AG04450 (cell line): ENCODE measurements at regions of chr1 and their contacts with region 1.

Region 1: DNA sequence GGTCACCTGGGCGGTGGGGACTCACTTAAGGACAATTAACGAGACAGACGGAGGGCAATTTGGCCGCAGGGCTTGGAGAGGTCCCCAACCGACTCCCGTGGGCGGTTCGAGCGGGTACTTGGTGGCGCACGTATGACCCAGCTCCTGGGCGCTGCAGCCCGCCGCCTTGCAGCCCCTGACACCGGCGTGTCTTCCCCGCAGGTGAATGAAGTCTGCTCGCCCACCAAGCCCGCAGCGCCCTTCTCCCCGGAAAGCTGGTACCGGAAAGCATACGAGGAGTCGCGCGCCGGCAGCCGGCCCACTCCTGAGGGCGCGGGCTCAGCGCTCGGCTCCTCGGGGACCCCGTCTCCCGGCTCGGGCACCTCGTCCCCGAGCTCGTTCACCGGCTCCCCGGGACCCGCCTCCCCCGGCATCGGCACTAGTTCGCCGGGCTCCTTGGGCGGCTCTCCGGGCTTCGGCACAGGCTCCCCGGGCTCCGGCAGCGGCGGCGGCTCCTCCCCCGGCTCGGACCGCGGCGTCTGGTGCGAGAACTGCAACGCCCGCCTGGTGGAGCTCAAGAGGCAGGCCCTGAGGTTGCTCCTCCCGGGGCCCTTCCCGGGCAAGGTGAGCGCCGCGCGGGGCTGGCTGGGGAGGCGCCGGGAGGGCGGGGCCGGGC is 1.4 kb downstream of the KIF26B start:
- DNase-seq: no peak
- H3K4me3 ChIP-seq: peak overlapping the region; percentile 80
- H3K27ac ChIP-seq: no peak overlapping the region
- H3K27me3 ChIP-seq: peaks cover 3% of the 10 kb centered on the region
- CTCF ChIP-seq: peak; percentile 68

Region 2: GRCh38 chr1:245142171-245142798 is 13.9 kb before region 1 on chr1:
- CTCF ChIA-PET with region 1: interaction called, 14 read pairs
- POLR2A ChIA-PET with region 1: no interaction called
- DNase-seq: no peak
- H3K4me3 ChIP-seq: no peak overlapping the region
- H3K27ac ChIP-seq: no peak overlapping the region
- H3K27me3 ChIP-seq: peaks cover 10% of the 10 kb centered on the region
- CTCF ChIP-seq: no peak

Region 3: DNA sequence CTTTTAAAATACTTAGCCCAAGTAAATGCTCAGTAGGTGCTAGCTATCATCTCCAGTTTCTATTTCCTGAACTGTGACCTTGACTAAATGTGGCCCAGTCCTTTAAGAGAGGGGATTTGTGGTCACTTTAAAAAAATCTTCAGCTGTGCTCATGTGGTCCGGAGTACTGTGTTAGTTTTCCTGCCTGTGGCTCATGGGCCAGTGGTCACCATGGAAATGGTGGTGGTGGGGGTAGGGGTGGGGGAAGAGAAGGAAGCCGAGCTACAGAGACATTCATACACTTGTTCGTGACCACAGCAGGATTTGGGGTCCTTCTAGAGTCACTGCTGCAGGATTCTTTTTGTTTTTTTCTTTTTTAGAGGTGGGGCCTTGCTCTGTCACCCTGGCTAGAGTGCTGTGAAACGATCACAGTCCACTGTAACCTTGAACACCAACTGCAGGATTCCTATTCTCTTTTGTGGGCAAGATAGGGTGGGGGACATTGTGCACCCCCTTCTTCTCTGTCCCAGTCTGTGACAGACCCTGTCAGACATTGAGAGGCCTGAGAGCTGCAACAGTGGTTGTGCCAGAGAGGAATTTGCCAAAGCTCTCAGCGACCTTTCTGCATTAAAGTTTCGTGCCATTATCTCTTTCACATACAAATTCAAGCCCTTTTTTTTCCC is 24.4 kb after region 1 on chr1:
- CTCF ChIA-PET with region 1: no interaction called
- POLR2A ChIA-PET with region 1: no interaction called
- DNase-seq: no peak
- H3K4me3 ChIP-seq: no peak overlapping the region
- H3K27ac ChIP-seq: no peak overlapping the region
- H3K27me3 ChIP-seq: no peaks in the 10 kb centered on the region
- CTCF ChIP-seq: no peak

Region 4: GRCh38 chr1:245380790-245381535 is 224.8 kb after region 1 on chr1:
- CTCF ChIA-PET with region 1: interaction called, 14 read pairs
- POLR2A ChIA-PET with region 1: no interaction called
- DNase-seq: no peak
- H3K4me3 ChIP-seq: no peak overlapping the region
- H3K27ac ChIP-seq: no peak overlapping the region
- H3K27me3 ChIP-seq: no peaks in the 10 kb centered on the region
- CTCF ChIP-seq: peak; percentile 51

Region 5: GRCh38 chr1:245500546-245500945 is 344.3 kb after region 1 on chr1:
- CTCF ChIA-PET with region 1: interaction called, 16 read pairs
- POLR2A ChIA-PET with region 1: no interaction called
- DNase-seq: peak; percentile 42
- H3K4me3 ChIP-seq: no peak overlapping the region
- H3K27ac ChIP-seq: no peak overlapping the region
- H3K27me3 ChIP-seq: no peaks in the 10 kb centered on the region
- CTCF ChIP-seq: peak; percentile 9; the same call in 1 of the 2 replicates

Region 6: DNA sequence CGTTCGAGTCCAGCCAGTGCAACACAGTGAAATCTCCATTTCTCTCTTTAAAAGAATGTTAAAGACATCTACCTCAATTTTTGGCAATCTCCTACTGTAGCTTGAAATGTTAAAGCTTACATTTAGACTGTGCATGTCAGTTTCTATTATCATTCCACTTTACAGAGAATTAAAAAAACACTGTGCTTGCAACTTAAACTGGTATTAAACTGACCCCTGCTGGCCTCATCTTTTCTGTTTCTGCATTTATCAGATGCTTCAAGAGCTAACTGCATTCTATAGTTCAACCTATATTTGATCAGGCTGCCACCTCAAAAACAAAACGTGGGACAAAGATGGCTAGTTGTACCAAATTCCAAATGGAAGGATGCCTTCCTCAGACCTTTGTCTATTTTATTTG is 1124.3 kb after region 1 on chr1:
- CTCF ChIA-PET with region 1: interaction called, 23 read pairs
- POLR2A ChIA-PET with region 1: no interaction called
- DNase-seq: no peak
- H3K4me3 ChIP-seq: no peak overlapping the region
- H3K27ac ChIP-seq: no peak overlapping the region
- H3K27me3 ChIP-seq: no peaks in the 10 kb centered on the region
- CTCF ChIP-seq: peak; percentile 50